GM10248 (cell line): ENCODE measurements at regions of chr17 and their contacts with region 1.

Region 1: DNA sequence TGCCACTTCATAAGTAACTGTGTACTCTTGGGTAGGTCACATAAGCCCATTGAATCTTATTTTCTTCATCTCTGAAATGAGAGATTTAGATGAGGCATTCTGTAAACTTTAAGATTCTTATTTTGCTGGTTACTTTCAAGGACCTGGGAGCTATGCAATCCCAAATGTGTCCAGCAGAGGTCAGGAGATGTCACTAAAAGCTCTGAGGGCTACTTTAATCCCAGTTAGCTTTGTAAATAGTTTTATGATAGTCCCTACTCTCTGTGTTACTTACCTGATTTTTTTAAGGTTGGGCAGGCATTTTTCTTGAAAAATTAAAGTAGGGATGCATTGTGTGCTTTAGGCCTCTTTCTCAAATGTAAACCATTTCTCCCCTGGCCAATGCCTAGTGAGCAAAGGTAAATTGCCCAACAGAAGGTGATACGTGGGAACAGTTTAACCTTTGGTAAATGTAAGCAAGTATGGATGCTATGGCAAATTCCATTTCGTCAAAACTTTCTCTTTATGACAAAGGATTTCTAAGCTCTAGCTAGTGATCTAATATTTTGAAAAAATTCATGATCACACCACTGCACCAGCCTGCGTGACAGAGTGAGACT is 57.1 kb upstream of the WSB1 start:
- DNase-seq: peak; percentile 64
- CTCF ChIP-seq: peak; percentile 85

Region 2: GRCh38 chr17:27206447-27206846 is 30.4 kb before region 1 on chr17:
- CTCF ChIA-PET with region 1: interaction called, 29 read pairs
- POLR2A ChIA-PET with region 1: no interaction called
- DNase-seq: no peak
- CTCF ChIP-seq: peak; percentile 35

Region 3: DNA sequence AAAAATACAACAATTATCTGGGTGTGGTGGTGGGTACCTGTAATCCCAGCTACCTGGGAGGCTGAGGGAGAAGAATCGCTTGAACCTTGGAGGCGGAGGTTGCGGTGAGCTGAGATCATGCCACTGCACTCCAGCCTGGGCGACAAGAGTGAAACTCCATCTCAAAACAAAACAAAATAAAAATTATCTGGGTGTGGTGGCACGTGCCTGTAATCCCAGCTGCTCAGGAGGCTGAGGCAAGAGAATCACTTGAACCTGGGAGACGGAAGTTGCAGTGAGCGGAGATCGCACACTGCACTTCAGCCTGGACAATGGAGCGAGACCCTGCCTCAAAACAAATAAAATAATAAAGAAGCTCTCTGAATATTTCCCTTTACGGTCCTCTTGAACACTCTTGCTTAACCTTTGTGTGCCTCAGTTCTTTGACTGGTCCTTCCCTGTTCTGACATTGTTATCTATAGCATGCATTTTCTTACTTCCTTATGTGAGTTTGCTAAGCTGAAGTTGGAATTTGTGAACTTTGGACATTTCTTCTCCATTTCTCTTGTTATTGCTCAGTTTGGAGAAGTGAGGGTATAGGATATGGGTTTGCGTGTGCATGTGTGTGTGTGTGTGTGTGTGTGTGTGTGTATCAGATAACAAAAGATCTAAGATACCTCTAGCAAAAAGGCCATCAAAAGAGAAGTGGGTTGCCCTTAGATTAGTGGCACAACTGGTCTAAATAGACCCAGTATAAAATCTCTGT is 27.4 kb after region 1 on chr17:
- CTCF ChIA-PET with region 1: interaction called, 33 read pairs
- POLR2A ChIA-PET with region 1: no interaction called
- DNase-seq: no peak
- CTCF ChIP-seq: no peak

Region 4: GRCh38 chr17:27332485-27333409 is 95.9 kb after region 1 on chr17:
- CTCF ChIA-PET with region 1: interaction called, 90 read pairs
- POLR2A ChIA-PET with region 1: interaction called, 6 read pairs
- DNase-seq: peak; percentile 91
- CTCF ChIP-seq: peak; percentile 81

Region 5: DNA sequence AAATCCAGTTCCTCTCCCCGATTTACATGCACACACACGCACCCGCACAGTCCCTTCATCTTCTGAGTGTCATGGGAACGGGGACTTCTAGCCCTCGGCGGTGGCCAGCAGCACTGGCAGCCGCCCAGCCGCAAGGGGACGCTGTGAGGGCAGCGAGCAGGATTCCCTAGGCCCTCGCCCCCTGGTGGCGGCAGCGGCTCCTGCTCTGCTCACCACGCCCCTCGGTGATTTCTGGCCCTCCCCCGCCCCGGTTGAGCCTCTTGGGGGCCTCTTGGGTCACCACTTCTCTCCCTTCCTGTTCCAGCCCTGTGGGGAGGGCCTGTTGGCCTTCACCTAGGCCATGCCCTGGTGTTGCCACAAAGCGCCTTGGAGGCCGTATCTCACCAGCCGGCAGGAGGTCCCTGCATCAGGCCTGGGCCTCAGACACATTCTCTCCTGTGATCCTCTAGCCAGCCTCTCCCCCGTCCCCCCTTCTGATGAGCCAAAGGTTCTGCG is 144.2 kb after region 1 on chr17:
- CTCF ChIA-PET with region 1: interaction called, 35 read pairs
- POLR2A ChIA-PET with region 1: no interaction called
- DNase-seq: peak; percentile 91
- CTCF ChIP-seq: peak; percentile 98

Region 6: DNA sequence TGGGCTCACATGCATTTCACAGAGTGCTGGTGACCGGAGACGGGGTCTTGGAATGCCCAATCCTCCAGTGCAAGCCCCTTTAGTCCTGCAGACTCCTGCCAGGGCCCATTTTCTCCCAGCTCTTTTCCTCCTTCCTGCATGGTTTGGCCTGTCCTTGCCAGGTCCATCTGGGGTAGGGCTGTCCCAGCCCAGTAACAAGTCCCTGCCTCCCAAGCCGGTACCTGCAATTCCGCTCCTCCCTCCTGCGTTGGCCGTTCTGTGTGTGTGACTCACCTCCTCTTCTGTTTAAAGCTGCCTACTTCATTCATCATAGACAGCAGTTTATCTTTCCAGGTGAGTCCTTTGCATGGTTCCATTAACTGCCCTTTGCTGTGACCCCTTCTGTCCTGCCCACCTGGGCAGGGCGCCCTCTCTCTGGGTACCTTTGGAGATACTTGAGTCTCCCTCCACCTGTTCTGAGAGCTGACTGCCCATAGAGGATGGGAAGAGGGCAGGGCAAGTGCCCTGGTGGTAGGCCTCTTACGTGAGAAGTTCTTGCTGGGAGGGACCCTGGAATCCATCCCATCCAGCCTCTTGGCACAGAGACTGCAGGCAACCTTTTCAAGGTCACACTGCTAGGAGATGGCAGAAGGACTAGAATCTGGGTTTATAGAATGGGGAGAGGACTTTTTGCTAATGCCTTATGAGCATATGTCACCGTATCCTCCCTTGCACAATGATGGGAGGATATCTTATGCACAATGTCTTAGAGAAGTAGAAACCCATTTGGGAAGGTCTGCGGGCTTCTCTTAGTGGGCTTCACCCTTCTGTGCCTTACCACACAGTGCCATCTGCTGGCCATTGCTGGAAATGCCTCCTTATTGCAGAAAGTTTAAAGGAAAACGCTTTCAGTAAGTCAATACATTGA is 364.5 kb after region 1 on chr17:
- CTCF ChIA-PET with region 1: interaction called, 139 read pairs
- POLR2A ChIA-PET with region 1: no interaction called
- DNase-seq: peak; percentile 71
- CTCF ChIP-seq: peak; percentile 89